AG04450 (cell line): ENCODE measurements at regions of chr1 and their contacts with region 1.

Region 1: GRCh38 chr1:218430822-218431221 is 85.7 kb downstream of the TGFB2 start:
- DNase-seq: no peak
- H3K4me3 ChIP-seq: no peak overlapping the region
- H3K27ac ChIP-seq: no peak overlapping the region
- H3K27me3 ChIP-seq: no peaks in the 10 kb centered on the region
- CTCF ChIP-seq: no peak

Region 2: GRCh38 chr1:218377143-218377660 is 53.6 kb before region 1 on chr1:
- CTCF ChIA-PET with region 1: no interaction called
- POLR2A ChIA-PET with region 1: no interaction called
- DNase-seq: peak; percentile 93
- H3K4me3 ChIP-seq: peak overlapping the region; percentile 34
- H3K27ac ChIP-seq: peak overlapping the region; percentile 87
- H3K27me3 ChIP-seq: no peaks in the 10 kb centered on the region
- CTCF ChIP-seq: no peak

Region 3: DNA sequence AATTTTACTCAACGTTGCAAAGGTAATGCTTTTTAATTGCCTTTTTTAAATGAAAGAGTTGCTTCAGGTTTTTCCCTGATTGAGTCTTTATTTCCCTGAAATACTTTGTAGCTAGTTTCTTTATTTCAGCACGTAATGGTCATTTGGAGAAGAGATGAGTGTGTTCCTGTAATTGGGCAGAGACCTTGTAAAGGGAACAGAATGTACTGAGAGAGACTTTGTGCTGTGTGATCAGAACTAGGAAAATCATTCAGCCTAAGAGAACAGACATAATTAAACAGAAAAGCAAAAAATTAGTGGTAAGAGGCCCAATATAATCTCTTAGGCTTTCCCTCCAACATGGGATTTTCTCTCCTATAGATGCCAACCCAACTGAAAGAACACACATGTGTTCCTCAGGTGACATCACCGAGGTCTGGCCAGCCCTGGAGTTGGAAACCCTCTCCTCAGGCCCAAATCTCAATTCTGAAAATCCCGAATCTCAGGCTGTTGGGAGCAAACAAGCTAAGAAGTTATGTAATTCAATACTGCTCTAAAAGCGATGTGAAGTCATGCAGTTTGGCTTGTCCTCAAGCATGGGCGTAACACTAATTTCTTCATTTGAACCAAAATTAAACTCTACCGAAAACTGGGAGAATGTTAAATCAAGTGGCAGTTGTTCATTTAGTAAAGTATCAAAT is 16.3 kb after region 1 on chr1:
- CTCF ChIA-PET with region 1: no interaction called
- POLR2A ChIA-PET with region 1: no interaction called
- DNase-seq: no peak
- H3K4me3 ChIP-seq: no peak overlapping the region
- H3K27ac ChIP-seq: no peak overlapping the region
- H3K27me3 ChIP-seq: no peaks in the 10 kb centered on the region
- CTCF ChIP-seq: no peak

Region 4: GRCh38 chr1:219066631-219067349 is 636.0 kb after region 1 on chr1:
- CTCF ChIA-PET with region 1: interaction called, 13 read pairs
- POLR2A ChIA-PET with region 1: no interaction called
- DNase-seq: no peak
- H3K4me3 ChIP-seq: no peak overlapping the region
- H3K27ac ChIP-seq: peak overlapping the region; percentile 54
- H3K27me3 ChIP-seq: no peaks in the 10 kb centered on the region
- CTCF ChIP-seq: peak; percentile 60